Panc1 (cell line): ENCODE measurements at regions of chr9 and their contacts with region 1.

Region 1: DNA sequence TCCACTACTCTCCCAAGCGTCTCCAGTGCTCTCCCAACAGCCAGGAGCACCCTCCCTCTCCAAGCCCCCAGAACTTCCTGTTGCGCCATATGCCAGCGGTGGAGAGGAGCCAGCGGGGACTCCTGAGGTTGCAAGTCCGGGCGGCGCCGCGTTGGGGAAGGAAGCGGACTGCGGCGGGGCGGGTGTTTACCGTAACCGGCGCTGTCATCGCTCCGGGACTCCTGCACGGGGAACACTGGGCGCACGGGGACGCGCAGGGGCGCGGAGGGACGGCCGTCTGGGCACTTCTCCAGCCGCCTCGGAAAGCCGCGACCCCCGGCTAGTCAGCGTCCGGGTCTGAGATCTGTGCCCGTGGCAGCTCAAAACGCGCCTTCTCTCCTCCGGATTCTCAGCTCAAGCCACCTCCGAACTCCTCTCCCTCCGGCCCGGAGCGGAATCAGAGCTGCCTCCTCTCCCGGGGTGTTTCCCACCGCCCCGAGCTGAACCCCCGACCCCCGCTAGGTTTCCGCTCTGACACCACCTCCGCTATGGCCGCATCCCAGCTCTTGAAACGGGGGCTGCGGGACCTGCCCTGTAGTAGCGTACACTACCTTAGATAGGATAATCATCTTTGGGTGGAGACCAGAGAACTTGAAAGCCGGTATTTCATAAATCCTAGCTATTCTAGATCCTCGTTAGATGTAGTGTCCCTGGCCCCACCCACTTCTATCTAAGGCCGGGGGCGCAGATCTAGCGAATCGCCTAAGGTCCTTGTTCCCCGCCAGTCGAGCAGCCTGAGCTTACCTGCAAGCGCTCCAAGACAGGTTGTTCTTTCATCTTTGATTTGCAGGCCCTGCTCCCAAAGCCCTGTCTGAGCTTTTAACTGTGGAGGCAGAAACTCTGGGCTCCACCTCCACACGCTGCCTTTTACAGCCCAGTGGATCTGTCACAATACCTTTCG is at the start of gene TRPM6:
- DNase-seq: no peak
- ATAC-seq: peak; percentile 81
- H3K4me3 ChIP-seq: peak within 1 kb of the TSS; percentile 49 to 59
- H3K27ac ChIP-seq: no peak within 1 kb of the TSS
- H3K4me1 ChIP-seq: no peaks in the 10 kb centered on the region
- H3K27me3 ChIP-seq: peaks cover 9% of the 10 kb centered on the region
- CTCF ChIP-seq: no peak
- total RNA-seq, gene TRPM6: 0.05 TPM

Region 2: GRCh38 chr9:74804018-74804385 is 83.3 kb before region 1 on chr9:
- CTCF ChIA-PET with region 1: no interaction called
- POLR2A ChIA-PET with region 1: no interaction called
- in situ Hi-C with region 1: no loop called
- intact Hi-C with region 1: loop called (anchors 10 kb)
- DNase-seq: no peak
- ATAC-seq: peak; percentile 69
- H3K4me3 ChIP-seq: no peak overlapping the region
- H3K27ac ChIP-seq: no peak overlapping the region
- H3K4me1 ChIP-seq: no peaks in the 10 kb centered on the region; the same call in 1 of the 2 replicates
- H3K27me3 ChIP-seq: no peaks in the 10 kb centered on the region
- CTCF ChIP-seq: no peak

Region 3: GRCh38 chr9:75289332-75289731 is 402.0 kb after region 1 on chr9:
- CTCF ChIA-PET with region 1: no interaction called
- POLR2A ChIA-PET with region 1: no interaction called
- in situ Hi-C with region 1: no loop called
- intact Hi-C with region 1: no loop called
- DNase-seq: no peak
- ATAC-seq: no peak
- H3K4me3 ChIP-seq: no peak overlapping the region
- H3K27ac ChIP-seq: no peak overlapping the region
- H3K4me1 ChIP-seq: no peaks in the 10 kb centered on the region
- H3K27me3 ChIP-seq: no peaks in the 10 kb centered on the region
- CTCF ChIP-seq: no peak